OCI-LY7 (cell line): ENCODE measurements at regions of chr4 and their contacts with region 1.

Region 1: DNA sequence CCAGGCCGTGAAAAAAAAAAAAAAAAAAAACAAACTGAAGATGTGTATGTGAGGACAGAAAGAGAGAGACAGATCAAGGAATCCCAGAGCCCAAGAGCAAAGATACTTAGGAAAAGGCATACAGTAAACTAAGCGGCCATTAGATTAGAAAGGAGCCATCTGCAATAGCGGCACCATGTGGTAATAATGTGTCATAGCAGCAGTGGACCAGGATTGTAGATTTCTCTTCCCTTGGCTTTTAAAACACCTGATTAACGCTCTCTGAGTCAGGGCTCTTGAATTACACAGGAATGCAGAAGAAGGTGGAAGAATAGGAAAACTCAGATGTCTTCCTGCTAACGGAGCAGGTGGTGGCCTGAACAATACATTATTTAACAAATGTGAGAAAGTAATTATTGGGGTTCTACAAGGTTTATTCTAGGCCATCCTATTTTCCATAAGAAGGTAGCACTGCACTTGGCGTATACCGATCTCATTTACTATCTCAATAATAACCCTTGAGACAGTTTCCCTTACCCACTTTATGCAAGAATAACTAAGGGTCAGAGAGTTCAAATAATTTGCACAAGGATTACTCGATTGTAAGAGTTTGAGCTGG is 182.7 kb downstream of the KCNIP4 start:
- DNase-seq: peak; percentile 41
- H3K4me3 ChIP-seq: no peak overlapping the region
- H3K27ac ChIP-seq: no peak overlapping the region
- H3K4me1 ChIP-seq: no peaks in the 10 kb centered on the region
- CTCF ChIP-seq: peak; percentile 85

Region 2: DNA sequence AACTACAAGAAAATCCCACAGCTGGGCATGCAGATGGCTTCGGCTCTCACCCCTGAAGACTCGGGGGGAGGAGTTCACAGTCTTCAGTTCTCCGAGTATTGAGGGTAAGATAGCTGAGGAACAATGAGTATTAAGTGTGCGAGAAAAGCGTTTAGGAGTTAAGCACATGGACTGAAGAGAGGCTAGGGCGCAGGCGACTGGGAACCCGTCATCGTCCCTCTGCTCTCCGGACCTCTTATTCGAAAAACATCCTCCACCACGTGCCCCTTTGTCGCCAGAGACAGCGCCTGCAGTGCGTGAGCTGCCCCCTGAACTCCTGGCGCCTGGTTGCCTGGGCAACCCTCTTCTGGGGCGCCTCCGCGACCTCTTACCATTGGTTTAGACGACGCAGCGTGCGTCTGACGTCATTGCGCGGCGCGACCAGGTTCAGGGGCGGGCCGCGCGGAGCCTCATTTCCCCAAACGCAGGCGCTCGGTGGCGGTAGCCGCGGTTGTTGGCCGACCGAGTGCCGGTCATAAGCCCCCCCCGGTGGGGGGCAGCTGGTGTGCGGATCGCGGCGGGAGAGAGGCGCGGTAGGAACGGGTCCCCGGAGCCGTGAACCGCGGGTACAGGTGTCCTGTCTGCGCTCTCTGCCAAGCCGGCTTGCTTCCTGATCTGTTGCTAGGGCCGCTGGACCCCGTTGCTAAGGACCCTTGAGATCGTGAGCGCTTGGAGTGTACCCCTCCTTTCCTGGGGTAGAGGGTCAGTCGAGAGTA is 1065.7 kb before region 1 on chr4 and contains the start of gene PACRGL:
- CTCF ChIA-PET with region 1: no interaction called
- POLR2A ChIA-PET with region 1: no interaction called
- intact Hi-C with region 1: no loop called
- DNase-seq: peak; percentile 97
- H3K4me3 ChIP-seq: peak within 1 kb of the TSS; percentile 77
- H3K27ac ChIP-seq: peak within 1 kb of the TSS; percentile 67
- H3K4me1 ChIP-seq: peaks cover 15% of the 10 kb centered on the region
- CTCF ChIP-seq: no peak
- total RNA-seq, gene PACRGL: 28.3 and 29.7 TPM in 2 replicates

Region 3: DNA sequence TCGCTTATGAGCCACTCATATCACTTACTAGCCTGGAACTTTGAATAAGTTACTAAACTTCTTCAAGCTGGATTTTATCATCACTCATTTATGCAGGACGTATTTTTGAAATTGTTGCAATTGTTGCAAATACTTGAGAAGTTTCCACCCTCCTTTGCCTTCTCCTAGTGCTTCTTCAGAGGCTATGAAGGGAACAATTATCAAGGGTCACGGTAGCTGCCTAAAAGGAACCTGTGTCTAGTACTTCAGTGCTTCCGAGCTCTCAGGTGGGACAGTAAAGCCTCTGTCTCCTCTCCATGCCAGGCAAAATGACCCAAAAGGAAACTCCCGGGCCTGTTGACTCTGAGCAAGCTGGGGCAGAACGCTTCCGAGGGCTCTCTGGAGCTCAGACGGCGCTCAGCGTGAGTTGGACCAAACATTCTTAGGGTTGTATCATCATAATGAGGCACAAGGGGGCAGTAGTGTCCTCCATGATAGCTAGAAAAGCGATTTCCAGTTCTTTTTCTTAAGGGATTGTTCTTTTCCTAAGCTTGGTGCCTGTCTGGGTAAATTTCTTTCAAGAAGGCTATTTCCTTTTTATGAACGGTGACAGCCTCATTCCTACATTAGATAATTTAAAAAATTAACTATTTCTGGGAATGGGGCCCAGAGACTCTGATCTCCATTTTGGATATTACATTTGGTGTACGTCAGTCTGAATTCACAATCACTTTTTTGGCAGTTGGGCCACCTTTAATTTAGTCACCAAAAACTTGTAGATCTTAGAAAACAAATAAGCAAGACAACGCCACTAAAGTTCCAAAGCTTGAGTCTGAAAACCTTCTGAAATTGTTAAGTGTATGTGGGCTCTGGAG is 992.5 kb before region 1 on chr4:
- CTCF ChIA-PET with region 1: no interaction called
- POLR2A ChIA-PET with region 1: no interaction called
- intact Hi-C with region 1: loop called (anchors 5 kb)
- DNase-seq: peak; percentile 43
- H3K4me3 ChIP-seq: no peak overlapping the region
- H3K27ac ChIP-seq: no peak overlapping the region
- H3K4me1 ChIP-seq: no peaks in the 10 kb centered on the region
- CTCF ChIP-seq: peak; percentile 81

Region 4: DNA sequence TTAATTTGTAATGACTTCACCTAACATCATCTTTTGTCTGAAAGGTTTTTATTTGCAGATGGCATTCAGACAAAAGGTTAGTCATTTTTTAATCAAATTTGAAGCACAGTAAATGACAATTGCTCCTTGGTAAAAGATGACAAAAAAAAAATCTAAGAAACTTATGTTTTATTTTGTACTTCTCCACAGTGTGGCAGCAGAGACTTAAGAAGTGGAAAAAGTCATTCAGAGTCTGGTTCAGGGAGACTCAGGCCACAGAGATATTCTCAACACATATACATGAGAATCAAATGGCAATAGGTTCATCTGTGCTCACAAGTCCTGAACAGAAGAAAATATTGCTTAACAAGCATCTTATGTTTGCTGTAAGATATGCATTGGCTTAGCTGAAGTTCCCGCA is 253.6 kb before region 1 on chr4:
- CTCF ChIA-PET with region 1: no interaction called
- POLR2A ChIA-PET with region 1: no interaction called
- intact Hi-C with region 1: loop called (anchors 1 kb)
- DNase-seq: peak; percentile 16
- H3K4me3 ChIP-seq: no peak overlapping the region
- H3K27ac ChIP-seq: no peak overlapping the region
- H3K4me1 ChIP-seq: no peaks in the 10 kb centered on the region
- CTCF ChIP-seq: peak; percentile 72

Region 5: DNA sequence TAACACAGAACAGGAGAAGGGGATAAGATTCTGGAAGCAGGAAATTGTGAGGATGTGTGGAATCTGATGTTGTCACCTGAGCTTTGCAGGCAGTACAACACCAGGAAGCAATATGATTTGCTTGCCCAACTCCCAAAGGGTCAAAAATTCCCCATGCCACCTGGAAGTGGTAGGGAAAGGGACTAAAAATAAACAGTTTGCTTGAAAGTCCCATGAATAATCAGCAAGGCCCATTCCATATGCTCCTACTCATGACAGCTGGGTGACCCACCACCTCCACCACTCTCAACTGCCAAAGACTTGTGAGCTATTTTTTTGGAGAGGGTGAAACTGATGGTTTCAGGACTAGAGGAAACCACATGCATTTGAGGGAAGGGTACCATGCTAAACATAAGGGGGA is 14.2 kb after region 1 on chr4:
- CTCF ChIA-PET with region 1: no interaction called
- POLR2A ChIA-PET with region 1: no interaction called
- intact Hi-C with region 1: no loop called
- DNase-seq: no peak
- H3K4me3 ChIP-seq: no peak overlapping the region
- H3K27ac ChIP-seq: no peak overlapping the region
- H3K4me1 ChIP-seq: no peaks in the 10 kb centered on the region
- CTCF ChIP-seq: no peak

Region 6: GRCh38 chr4:21921526-21922180 is 155.7 kb after region 1 on chr4:
- CTCF ChIA-PET with region 1: no interaction called
- POLR2A ChIA-PET with region 1: no interaction called
- intact Hi-C with region 1: no loop called
- DNase-seq: no peak
- H3K4me3 ChIP-seq: no peak overlapping the region
- H3K27ac ChIP-seq: no peak overlapping the region
- H3K4me1 ChIP-seq: no peaks in the 10 kb centered on the region
- CTCF ChIP-seq: no peak